Activated naive CD4-positive, alpha-beta T cell treated with anti-CD3 and anti-CD28 coated beads for 36 hours (primary cell): ENCODE measurements at regions of chr7 and their contacts with region 1.

Region 1: DNA sequence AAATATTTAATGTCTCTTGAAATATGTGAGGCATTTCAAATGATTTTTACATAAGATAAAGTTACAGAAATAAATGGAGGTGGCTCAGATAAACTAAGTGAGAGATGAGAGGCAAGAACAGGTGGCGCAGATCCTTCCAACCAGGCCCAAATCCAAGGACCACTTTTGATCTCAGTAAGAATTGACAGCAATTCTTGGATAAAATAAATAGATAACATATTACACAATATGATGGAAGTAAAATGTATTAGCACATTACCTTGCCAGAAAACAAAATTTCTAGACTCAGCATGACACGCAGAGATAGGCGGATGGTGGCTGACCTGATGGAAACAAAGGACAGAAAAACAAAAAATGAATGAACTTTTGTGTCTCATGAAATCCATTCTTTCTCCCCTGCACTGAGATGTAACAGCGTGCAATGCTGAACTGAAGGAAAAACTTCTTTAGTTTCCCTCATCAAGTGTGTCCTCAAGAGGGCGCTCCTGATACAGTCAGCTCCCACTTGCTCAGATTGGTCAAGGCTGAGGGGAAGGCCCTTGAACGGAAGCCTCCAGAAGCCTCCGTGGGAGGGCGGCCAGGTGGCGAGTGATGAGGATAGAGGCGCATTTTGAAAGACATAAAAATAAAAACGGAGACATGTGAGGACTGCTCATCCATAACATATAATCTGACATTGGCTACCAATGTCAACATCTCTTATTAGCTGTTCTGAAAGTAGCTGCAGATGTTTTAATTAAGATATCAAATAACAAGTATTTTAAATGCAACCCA is 62.8 kb upstream of the GSDME start:
- DNase-seq: peak; percentile 89
- H3K4me3 Mint-ChIP-seq: peak overlapping the region; percentile 63
- H3K27ac Mint-ChIP-seq: peak overlapping the region; percentile 91
- H3K4me1 Mint-ChIP-seq: peaks cover 21% of the 10 kb centered on the region
- H3K27me3 Mint-ChIP-seq: no peaks in the 10 kb centered on the region

Region 2: GRCh38 chr7:24866004-24866615 is 46.0 kb after region 1 on chr7:
- CTCF ChIA-PET with region 1: no interaction called
- intact Hi-C with region 1: loop called (anchors 1 kb)
- DNase-seq: peak; percentile 59
- H3K4me3 Mint-ChIP-seq: no peak overlapping the region
- H3K27ac Mint-ChIP-seq: peak overlapping the region; percentile 47
- H3K4me1 Mint-ChIP-seq: peaks cover 21% of the 10 kb centered on the region
- H3K27me3 Mint-ChIP-seq: no peaks in the 10 kb centered on the region

Region 3: GRCh38 chr7:24898691-24899090 is 78.6 kb after region 1 on chr7:
- CTCF ChIA-PET with region 1: no interaction called
- intact Hi-C with region 1: loop called (anchors 1 kb)
- DNase-seq: no peak
- H3K4me3 Mint-ChIP-seq: no peak overlapping the region
- H3K27ac Mint-ChIP-seq: no peak overlapping the region
- H3K4me1 Mint-ChIP-seq: peaks cover 54% of the 10 kb centered on the region
- H3K27me3 Mint-ChIP-seq: no peaks in the 10 kb centered on the region

Region 4: DNA sequence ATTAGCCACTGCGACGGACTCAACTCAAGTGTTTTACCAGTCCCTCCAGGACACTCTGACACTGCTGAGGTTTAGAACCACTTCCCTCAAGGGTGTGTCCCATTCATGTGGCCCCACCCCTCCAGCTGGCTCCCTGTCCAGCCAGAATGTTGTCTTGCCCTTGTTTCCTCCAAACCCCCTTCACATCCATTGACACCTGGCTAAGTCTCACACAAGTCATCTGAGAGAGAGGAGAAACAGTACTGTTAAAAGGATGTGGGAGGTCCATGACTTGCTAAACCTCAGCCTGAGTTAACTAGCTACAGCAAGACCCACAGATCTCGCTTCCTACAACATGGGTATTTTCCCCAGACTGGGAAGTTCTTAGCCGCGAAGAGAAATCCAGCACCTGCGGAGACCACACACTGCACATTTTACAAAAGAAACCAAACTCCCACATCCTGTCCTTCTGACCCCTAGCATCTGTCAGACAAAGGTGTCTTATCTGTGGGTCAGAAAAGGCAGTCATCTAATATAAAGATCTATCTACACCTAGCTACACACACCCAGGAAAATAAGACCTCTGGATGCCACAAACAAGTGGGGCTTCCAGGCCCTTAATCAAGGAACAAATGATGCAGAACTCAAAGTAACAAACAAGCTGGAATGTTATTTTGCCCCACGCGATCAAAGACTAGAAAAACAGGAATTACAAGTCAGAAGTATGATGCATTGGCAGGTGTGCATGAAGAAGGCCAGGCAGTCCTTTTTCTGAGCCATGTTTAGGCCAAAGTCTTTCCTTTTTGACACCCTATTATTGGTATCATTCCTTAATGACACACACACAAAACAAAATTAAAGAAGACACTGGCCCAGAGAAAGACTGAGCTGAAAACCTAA is 146.0 kb after region 1 on chr7:
- CTCF ChIA-PET with region 1: interaction called, 13 read pairs
- intact Hi-C with region 1: loop called (anchors 1 kb)
- DNase-seq: peak; percentile 68
- H3K4me3 Mint-ChIP-seq: peak overlapping the region; percentile 17
- H3K27ac Mint-ChIP-seq: peak overlapping the region; percentile 77
- H3K4me1 Mint-ChIP-seq: peaks cover 77% of the 10 kb centered on the region
- H3K27me3 Mint-ChIP-seq: no peaks in the 10 kb centered on the region

Region 5: GRCh38 chr7:25028370-25029021 is 208.4 kb after region 1 on chr7:
- CTCF ChIA-PET with region 1: interaction called, 8 read pairs
- intact Hi-C with region 1: loop called (anchors 1 kb)
- DNase-seq: peak; percentile 38
- H3K4me3 Mint-ChIP-seq: no peak overlapping the region
- H3K27ac Mint-ChIP-seq: peak overlapping the region; percentile 79
- H3K4me1 Mint-ChIP-seq: peaks cover 37% of the 10 kb centered on the region
- H3K27me3 Mint-ChIP-seq: no peaks in the 10 kb centered on the region

Region 6: GRCh38 chr7:25098096-25099046 is 278.3 kb after region 1 on chr7:
- CTCF ChIA-PET with region 1: interaction called, 191 read pairs
- intact Hi-C with region 1: loop called (anchors 1 kb)
- DNase-seq: peak; percentile 76
- H3K4me3 Mint-ChIP-seq: no peak overlapping the region
- H3K27ac Mint-ChIP-seq: no peak overlapping the region
- H3K4me1 Mint-ChIP-seq: peaks cover 7% of the 10 kb centered on the region
- H3K27me3 Mint-ChIP-seq: no peaks in the 10 kb centered on the region